ENCODE measurements at regions of chr10 and their contacts with region 1.

Region 1: DNA sequence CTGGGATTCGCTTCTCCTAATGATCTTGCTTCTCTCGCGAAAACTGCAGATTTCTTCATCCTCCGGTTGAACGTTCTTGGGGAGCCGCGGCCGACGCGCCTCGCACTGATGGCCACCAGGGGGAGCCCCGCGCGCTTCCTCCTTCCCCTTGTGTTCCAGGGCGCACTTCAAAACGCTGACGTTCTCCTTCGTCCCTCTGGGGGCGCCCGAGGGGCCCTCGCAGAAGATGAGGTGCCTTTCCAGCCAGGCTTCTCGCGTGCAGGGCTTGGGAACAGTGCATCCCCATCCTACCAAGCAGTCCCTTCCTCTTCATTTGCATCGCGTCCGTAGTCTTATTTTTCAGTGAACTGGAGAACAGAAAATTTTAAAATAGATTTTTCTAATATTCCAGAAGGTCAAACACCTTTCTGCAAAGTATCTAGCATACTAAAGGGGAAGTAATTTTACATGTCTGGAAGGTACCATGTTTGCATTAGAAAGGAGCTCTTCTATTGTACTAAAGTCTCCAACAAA is 22.5 kb downstream of the GSTO2 start:
- DNase-seq: peak; percentile 91
- ATAC-seq: peak; percentile 100
- H3K4me3 ChIP-seq: no peak overlapping the region
- H3K4me3 Mint-ChIP-seq: peak overlapping the region; percentile 44
- H3K27ac ChIP-seq: no peak overlapping the region
- H3K27ac Mint-ChIP-seq: peak overlapping the region; percentile 28
- H3K4me1 ChIP-seq: peaks cover 4 to 8% of the 10 kb centered on the region in 2 donors
- H3K4me1 Mint-ChIP-seq: peaks cover 5% of the 10 kb centered on the region
- H3K27me3 ChIP-seq: peaks cover 0 to 16% (median 6%) of the 10 kb centered on the region in 4 experiments
- H3K27me3 Mint-ChIP-seq: peaks cover 34% of the 10 kb centered on the region
- CTCF ChIP-seq: peak; percentile 100

Region 2: GRCh38 chr10:104268716-104269645 is 22.5 kb before region 1 on chr10 and contains the start of gene GSTO2:
- CTCF ChIA-PET with region 1: interaction called, 54 read pairs
- POLR2A ChIA-PET with region 1: no interaction called
- intact Hi-C with region 1: loop called (anchors 1 kb)
- DNase-seq: peak; percentile 99
- ATAC-seq: peak; percentile 97
- H3K4me3 ChIP-seq: peak within 1 kb of the TSS; percentile 68 to 90 (median 86)
- H3K4me3 Mint-ChIP-seq: peak within 1 kb of the TSS; percentile 88
- H3K27ac ChIP-seq: peak within 1 kb of the TSS; percentile 90 to 95
- H3K27ac Mint-ChIP-seq: peak within 1 kb of the TSS; percentile 92
- H3K4me1 ChIP-seq: peaks cover 20 to 22% of the 10 kb centered on the region in 2 donors
- H3K4me1 Mint-ChIP-seq: peaks cover 37% of the 10 kb centered on the region
- H3K27me3 ChIP-seq: peaks cover 0 to 1% (median under 1%) of the 10 kb centered on the region in 4 experiments
- H3K27me3 Mint-ChIP-seq: no peaks in the 10 kb centered on the region
- CTCF ChIP-seq: no peak
- total RNA-seq, gene GSTO2: 0.89 and 1.4 TPM in 2 replicates

Region 3: GRCh38 chr10:104274762-104275721 is 16.5 kb before region 1 on chr10:
- CTCF ChIA-PET with region 1: interaction called, 54 read pairs
- POLR2A ChIA-PET with region 1: no interaction called
- intact Hi-C with region 1: no loop called
- DNase-seq: peak; percentile 64
- ATAC-seq: peak; percentile 71
- H3K4me3 ChIP-seq: no peak overlapping the region
- H3K4me3 Mint-ChIP-seq: no peak overlapping the region
- H3K27ac ChIP-seq: no peak overlapping the region
- H3K27ac Mint-ChIP-seq: no peak overlapping the region
- H3K4me1 ChIP-seq: peaks cover 8 to 9% of the 10 kb centered on the region in 2 donors
- H3K4me1 Mint-ChIP-seq: peaks cover 4% of the 10 kb centered on the region
- H3K27me3 ChIP-seq: peaks cover 0 to 23% (median 14%) of the 10 kb centered on the region in 4 experiments
- H3K27me3 Mint-ChIP-seq: peaks cover 23% of the 10 kb centered on the region
- CTCF ChIP-seq: peak; percentile 86

Region 4: GRCh38 chr10:104308439-104308903 is 17.0 kb after region 1 on chr10:
- CTCF ChIA-PET with region 1: interaction called, 160 read pairs
- POLR2A ChIA-PET with region 1: no interaction called
- intact Hi-C with region 1: loop called (anchors 1 kb)
- DNase-seq: no peak
- ATAC-seq: no peak
- H3K4me3 ChIP-seq: no peak overlapping the region
- H3K4me3 Mint-ChIP-seq: no peak overlapping the region
- H3K27ac ChIP-seq: peak overlapping the region in 1 of 2 donors; percentile 49
- H3K27ac Mint-ChIP-seq: peak overlapping the region; percentile 76
- H3K4me1 ChIP-seq: peaks cover 13 to 21% of the 10 kb centered on the region in 2 donors
- H3K4me1 Mint-ChIP-seq: peaks cover 23% of the 10 kb centered on the region
- H3K27me3 ChIP-seq: no peaks in the 10 kb centered on the region
- H3K27me3 Mint-ChIP-seq: no peaks in the 10 kb centered on the region
- CTCF ChIP-seq: no peak

Region 5: GRCh38 chr10:104322416-104322782 is 30.9 kb after region 1 on chr10:
- CTCF ChIA-PET with region 1: interaction called, 10 read pairs
- POLR2A ChIA-PET with region 1: no interaction called
- intact Hi-C with region 1: no loop called
- DNase-seq: peak; percentile 41
- ATAC-seq: peak; percentile 48
- H3K4me3 ChIP-seq: peak overlapping the region in 1 of 5 experiments; percentile 30
- H3K4me3 Mint-ChIP-seq: peak overlapping the region; percentile 58
- H3K27ac ChIP-seq: peak overlapping the region; percentile 46 to 67
- H3K27ac Mint-ChIP-seq: peak overlapping the region; percentile 80
- H3K4me1 ChIP-seq: peaks cover 94 to 98% of the 10 kb centered on the region in 2 donors
- H3K4me1 Mint-ChIP-seq: peaks cover 93% of the 10 kb centered on the region
- H3K27me3 ChIP-seq: no peaks in the 10 kb centered on the region
- H3K27me3 Mint-ChIP-seq: no peaks in the 10 kb centered on the region
- CTCF ChIP-seq: no peak

Region 6: GRCh38 chr10:104345941-104346340 is 54.4 kb after region 1 on chr10:
- CTCF ChIA-PET with region 1: interaction called, 221 read pairs
- POLR2A ChIA-PET with region 1: no interaction called
- intact Hi-C with region 1: loop called (anchors 1 kb)
- DNase-seq: no peak
- ATAC-seq: no peak
- H3K4me3 ChIP-seq: no peak overlapping the region
- H3K4me3 Mint-ChIP-seq: no peak overlapping the region
- H3K27ac ChIP-seq: no peak overlapping the region
- H3K27ac Mint-ChIP-seq: no peak overlapping the region
- H3K4me1 ChIP-seq: peaks cover 16 to 41% of the 10 kb centered on the region in 2 donors
- H3K4me1 Mint-ChIP-seq: peaks cover 17% of the 10 kb centered on the region
- H3K27me3 ChIP-seq: no peaks in the 10 kb centered on the region
- H3K27me3 Mint-ChIP-seq: no peaks in the 10 kb centered on the region
- CTCF ChIP-seq: no peak

Measured in B cell (primary cell).